Right ventricle myocardium inferior (tissue), 1 donor: ENCODE measurements at regions of chr3 and their contacts with region 1.

Region 1: GRCh38 chr3:48151058-48151806 is 37.0 kb downstream of the CDC25A start:
- DNase-seq: peak; percentile 79
- ATAC-seq: peak; percentile 97

Region 2: GRCh38 chr3:47989981-47990440 is 161.2 kb before region 1 on chr3:
- intact Hi-C with region 1: loop called (anchors 2 kb)
- DNase-seq: peak; percentile 78
- ATAC-seq: peak; percentile 94